Common myeloid progenitor, CD34-positive (primary cell): ENCODE measurements at regions of chr16 and their contacts with region 1.

Region 1: DNA sequence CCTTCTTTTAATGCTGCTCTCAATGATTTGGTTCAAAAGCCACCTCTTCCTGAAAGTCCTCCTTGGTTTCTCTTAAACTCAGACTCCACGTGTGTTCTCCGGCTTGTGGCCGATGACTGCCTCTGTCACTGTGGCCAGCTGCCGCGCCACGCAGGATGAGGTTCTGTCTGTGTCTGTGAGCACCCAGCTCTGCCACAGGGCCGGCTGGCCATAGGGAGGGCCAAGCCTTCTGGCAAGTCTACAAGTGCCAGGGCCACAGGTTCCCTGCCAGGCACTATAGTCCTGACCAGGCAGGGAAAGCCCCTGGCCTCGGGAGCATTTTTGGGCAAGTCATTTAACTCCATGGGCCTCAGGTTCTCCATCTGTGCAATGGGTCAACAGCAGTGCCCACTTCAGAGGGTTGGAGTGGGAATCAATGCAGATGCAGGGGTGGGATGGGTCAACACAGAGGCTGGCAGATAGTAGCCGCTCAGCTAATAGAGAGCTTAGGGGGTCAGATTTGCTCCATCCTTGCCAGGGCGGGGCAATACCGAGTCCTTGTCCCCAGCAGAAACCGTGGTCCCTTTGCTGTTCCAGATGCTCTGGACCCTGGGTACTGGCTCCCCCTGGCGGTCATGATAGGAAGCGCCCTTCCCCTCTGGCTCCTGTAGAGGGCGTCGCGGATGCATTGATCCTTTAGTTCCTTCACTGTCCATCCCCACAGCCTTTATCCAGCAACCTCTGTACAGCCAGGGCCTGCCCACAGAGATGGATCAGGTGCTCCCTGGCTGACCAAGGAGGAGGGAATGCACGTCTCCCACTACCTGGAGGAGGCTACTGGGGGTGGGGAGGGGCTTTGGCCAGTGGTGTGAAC is 19.3 kb upstream of the ADGRG3 start:
- DNase-seq: peak; percentile 76 to 90 (median 88)
- H3K4me3 ChIP-seq: no peak overlapping the region
- H3K27ac ChIP-seq: no peak overlapping the region
- H3K4me1 ChIP-seq: peaks cover 7 to 85% (median 70%) of the 10 kb centered on the region in 4 experiments
- H3K27me3 ChIP-seq: no peaks in the 10 kb centered on the region

Region 2: GRCh38 chr16:57564571-57565270 is 84.1 kb before region 1 on chr16:
- CTCF ChIA-PET with region 1: no interaction called
- POLR2A ChIA-PET with region 1: no interaction called
- DNase-seq: no peak
- H3K4me3 ChIP-seq: no peak overlapping the region
- H3K27ac ChIP-seq: no peak overlapping the region
- H3K4me1 ChIP-seq: no peaks in the 10 kb centered on the region
- H3K27me3 ChIP-seq: no peaks in the 10 kb centered on the region

Region 3: GRCh38 chr16:57591086-57591869 is 57.5 kb before region 1 on chr16:
- CTCF ChIA-PET with region 1: interaction called, 500 read pairs
- POLR2A ChIA-PET with region 1: interaction called, 4 read pairs
- DNase-seq: peak; percentile 73 to 85 (median 81)
- H3K4me3 ChIP-seq: peak overlapping the region in 1 of 7 experiments; percentile 14
- H3K27ac ChIP-seq: no peak overlapping the region
- H3K4me1 ChIP-seq: peaks cover 10 to 37% (median 34%) of the 10 kb centered on the region in 4 experiments
- H3K27me3 ChIP-seq: no peaks in the 10 kb centered on the region

Region 4: DNA sequence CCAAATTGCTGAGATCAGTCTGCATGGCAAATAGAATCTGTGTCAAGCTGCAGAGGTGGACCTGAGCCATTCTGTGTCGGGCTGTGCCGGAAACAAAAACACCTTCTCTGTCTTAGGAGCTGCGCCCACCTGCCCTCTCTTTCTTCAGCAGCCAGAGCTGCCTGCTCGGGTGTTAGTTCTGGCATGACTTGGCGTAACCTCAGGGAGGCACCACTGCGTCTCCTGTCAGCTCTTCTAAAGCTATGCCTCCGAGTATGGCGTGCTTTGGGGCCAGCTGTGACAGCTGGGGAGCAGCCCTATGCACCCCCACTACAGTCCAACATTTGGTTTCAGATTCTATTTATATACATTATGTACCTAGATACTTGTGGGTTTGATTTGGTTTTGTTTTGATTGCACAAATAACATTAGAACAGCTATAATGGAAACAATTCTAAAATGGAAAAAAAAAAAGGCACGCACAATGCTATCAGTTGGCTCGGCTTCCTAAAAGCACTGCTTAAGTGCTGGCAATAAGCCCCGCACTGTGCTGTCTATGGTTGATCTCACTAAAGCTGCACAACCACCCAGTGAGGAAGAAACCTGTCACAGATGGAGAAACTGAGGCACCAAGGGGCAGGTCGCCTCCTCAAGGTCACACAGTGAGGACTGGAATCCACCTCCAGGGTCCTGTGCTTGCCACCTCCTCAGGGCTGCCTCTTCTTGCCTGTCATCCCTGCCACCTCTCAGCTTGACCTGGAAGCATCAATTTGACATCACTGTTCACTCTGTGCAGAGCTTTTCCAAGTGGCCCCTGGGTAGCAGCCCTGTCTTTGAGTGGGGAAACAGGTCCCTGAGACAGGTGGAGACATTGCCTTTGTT is 39.0 kb before region 1 on chr16:
- CTCF ChIA-PET with region 1: interaction called, 108 read pairs
- POLR2A ChIA-PET with region 1: interaction called, 8 read pairs
- DNase-seq: peak in 2 of 3 donors; percentile 86 to 89
- H3K4me3 ChIP-seq: peak overlapping the region in 2 of 7 experiments; percentile 19 to 25
- H3K27ac ChIP-seq: no peak overlapping the region
- H3K4me1 ChIP-seq: peaks cover 17 to 70% (median 59%) of the 10 kb centered on the region in 4 experiments
- H3K27me3 ChIP-seq: no peaks in the 10 kb centered on the region

Region 5: DNA sequence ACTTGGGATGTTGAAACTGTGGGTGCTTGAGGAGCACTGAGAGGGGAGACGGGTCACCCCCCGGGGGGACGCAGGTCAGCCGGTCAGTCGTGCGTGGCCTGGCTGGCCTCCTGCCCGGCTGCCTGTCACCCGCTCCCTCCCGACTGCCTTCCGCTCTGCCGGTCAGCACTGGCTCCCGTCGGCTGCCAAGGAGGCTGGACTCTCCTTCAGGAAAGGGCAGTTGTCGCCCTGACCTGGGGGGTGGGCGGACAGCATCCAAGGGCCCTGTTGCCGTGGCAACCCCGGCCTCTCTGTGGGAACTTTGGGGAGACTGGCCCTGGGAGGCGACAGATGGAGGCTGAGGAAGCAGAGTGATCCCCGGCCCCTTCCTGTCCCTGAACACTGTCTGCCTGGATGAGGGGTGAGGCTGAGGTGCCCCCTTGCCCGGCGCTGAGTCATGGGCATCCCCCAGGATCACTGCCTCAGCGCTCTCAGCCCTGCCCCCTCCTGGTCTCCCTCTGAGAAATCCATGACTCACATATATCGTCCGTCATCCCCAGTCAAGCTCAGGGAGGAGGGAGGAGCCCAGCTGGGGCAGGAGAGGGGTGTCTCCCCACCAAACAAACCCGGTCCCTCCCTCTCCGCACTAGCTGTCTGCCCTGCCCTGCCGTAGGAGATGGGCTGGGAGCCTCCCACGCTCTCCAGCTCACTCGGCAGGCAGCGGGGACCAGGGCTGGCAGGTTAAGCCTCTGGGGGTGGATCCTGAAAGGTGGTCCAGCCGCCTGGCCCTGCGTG is 20.6 kb before region 1 on chr16 and contains the start of gene ADGRG1:
- CTCF ChIA-PET with region 1: interaction called, 87 read pairs
- POLR2A ChIA-PET with region 1: interaction called, 7 read pairs
- DNase-seq: peak; percentile 93 to 98 (median 98)
- H3K4me3 ChIP-seq: peak within 1 kb of the TSS; percentile 65 to 86 (median 81)
- H3K27ac ChIP-seq: peak within 1 kb of the TSS; percentile 68 to 83
- H3K4me1 ChIP-seq: peaks cover 3 to 90% (median 84%) of the 10 kb centered on the region in 4 experiments
- H3K27me3 ChIP-seq: no peaks in the 10 kb centered on the region

Region 6: GRCh38 chr16:57683636-57684545 is 35.1 kb after region 1 on chr16:
- CTCF ChIA-PET with region 1: interaction called, 13 read pairs
- POLR2A ChIA-PET with region 1: no interaction called
- DNase-seq: no peak
- H3K4me3 ChIP-seq: no peak overlapping the region
- H3K27ac ChIP-seq: peak overlapping the region in 1 of 2 experiments; percentile 30
- H3K4me1 ChIP-seq: peaks cover 9 to 89% (median 75%) of the 10 kb centered on the region in 4 experiments
- H3K27me3 ChIP-seq: no peaks in the 10 kb centered on the region

Region 7: GRCh38 chr16:57700781-57701551 is 52.1 kb after region 1 on chr16:
- CTCF ChIA-PET with region 1: interaction called, 13 read pairs
- POLR2A ChIA-PET with region 1: no interaction called
- DNase-seq: no peak
- H3K4me3 ChIP-seq: no peak overlapping the region
- H3K27ac ChIP-seq: peak overlapping the region in 1 of 2 experiments; percentile 55
- H3K4me1 ChIP-seq: peaks cover 0 to 37% (median 30%) of the 10 kb centered on the region in 4 experiments
- H3K27me3 ChIP-seq: no peaks in the 10 kb centered on the region

Region 8: GRCh38 chr16:57734925-57735754 is 86.3 kb after region 1 on chr16:
- CTCF ChIA-PET with region 1: interaction called, 10 read pairs
- POLR2A ChIA-PET with region 1: no interaction called
- DNase-seq: peak; percentile 100
- H3K4me3 ChIP-seq: peak overlapping the region; percentile 77 to 94 (median 84)
- H3K27ac ChIP-seq: peak overlapping the region; percentile 93 to 94
- H3K4me1 ChIP-seq: peaks cover 0 to 40% (median 32%) of the 10 kb centered on the region in 4 experiments
- H3K27me3 ChIP-seq: no peaks in the 10 kb centered on the region